ENCODE measurements at regions of chr13 and their contacts with region 1.

Region 1: DNA sequence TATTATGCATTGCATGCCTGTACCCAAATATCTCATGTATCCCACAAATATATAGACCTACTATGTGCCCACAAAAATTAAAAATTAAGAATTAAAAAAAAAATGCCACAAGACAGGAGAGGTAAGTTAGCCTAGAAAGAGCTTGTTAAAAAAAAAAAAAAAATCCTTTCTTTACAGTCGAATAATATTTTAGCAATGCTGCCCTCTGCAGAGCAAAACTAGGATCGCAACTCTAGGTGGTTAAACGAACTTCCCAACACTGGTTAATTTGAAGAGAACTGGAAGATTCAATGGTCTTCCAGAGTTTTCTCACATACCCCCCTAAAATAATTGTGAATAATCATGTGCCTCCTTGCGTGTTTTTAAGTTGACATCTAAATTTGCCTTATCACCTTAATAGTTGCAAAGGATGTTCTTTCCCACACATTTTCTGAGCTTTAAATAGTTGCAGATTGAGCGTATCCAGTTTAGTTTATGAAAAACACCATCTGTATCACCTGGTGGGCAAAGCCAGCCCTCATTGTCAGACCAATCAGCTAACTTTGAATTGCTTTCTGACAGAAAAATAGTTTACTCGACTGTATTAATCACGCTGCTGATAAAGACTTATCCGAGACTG is 47.4 kb upstream of the RCBTB2 start:
- DNase-seq: peak; percentile 47
- H3K27ac ChIP-seq: no peak overlapping the region
- CTCF ChIP-seq: peak; percentile 78

Region 2: DNA sequence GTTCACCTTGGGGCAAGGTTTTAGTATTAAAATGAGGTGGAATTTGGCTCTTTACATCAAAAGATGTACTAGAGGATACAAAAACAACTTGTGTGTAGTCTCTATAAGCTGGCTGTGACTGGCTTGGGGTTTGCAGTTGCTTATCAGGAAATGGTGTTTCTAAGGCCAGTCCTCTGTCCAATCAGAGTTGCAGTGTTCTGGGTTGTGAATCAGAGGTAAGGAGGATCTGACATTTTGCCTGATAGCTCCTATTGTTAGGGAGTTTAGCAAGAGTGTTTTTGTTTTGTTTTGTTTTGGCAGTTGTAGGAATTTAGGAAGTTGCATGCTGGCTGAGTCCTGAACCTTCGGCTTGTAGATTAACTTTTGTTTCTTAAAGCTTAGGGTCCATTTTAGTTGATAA is 1763.2 kb before region 1 on chr13:
- CTCF ChIA-PET with region 1: no interaction called
- POLR2A ChIA-PET with region 1: no interaction called
- DNase-seq: no peak
- H3K27ac ChIP-seq: no peak overlapping the region
- CTCF ChIP-seq: no peak

Region 3: DNA sequence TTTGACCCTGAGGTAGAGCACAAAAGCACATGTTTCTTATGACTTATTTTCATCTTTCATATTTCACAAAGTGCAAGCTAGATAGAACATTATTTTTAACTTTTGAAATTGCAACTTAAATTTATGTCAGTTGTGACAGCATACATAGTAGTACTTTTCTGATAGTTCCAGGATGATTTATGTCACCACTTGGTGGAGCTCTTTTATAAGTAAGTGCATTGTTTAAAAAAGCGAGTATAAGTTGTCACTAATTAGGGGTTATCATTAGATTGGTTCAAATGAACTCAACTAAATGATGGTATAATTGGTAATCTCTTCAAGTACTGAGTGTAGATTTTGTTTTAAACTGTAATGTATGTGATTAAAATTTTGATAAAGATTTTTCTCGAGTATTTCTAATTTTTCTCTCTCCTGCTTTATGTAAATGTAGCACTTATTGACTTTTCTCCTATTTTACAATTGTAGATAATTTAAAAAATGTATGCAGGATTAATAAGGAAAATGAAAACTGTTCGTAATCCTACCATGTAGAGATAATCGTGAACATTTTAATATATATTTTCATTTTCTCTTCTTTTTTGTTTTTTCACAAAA is 245.7 kb before region 1 on chr13:
- CTCF ChIA-PET with region 1: interaction called, 11 read pairs
- POLR2A ChIA-PET with region 1: no interaction called
- DNase-seq: peak; percentile 18
- H3K27ac ChIP-seq: no peak overlapping the region
- CTCF ChIP-seq: peak; percentile 67

Region 4: DNA sequence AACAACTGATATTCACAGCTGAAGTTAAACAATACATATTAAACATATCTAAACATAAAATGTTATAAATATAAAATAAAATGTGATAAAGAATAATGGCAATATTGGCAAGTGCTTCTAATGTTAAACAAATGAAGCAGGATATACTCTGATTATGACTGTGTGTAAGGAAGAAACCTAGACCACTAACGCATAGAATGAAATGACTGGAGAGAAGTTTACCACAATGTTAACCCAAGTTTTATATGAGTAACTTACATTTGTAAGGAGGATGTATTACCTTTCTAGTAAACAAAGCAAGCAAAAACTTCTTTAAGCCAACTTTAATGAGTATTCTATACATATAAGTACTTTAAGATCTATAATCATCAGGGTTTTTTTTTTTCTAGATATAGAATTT is 233.7 kb before region 1 on chr13:
- CTCF ChIA-PET with region 1: no interaction called
- POLR2A ChIA-PET with region 1: no interaction called
- DNase-seq: no peak
- H3K27ac ChIP-seq: no peak overlapping the region
- CTCF ChIP-seq: no peak

Region 5: DNA sequence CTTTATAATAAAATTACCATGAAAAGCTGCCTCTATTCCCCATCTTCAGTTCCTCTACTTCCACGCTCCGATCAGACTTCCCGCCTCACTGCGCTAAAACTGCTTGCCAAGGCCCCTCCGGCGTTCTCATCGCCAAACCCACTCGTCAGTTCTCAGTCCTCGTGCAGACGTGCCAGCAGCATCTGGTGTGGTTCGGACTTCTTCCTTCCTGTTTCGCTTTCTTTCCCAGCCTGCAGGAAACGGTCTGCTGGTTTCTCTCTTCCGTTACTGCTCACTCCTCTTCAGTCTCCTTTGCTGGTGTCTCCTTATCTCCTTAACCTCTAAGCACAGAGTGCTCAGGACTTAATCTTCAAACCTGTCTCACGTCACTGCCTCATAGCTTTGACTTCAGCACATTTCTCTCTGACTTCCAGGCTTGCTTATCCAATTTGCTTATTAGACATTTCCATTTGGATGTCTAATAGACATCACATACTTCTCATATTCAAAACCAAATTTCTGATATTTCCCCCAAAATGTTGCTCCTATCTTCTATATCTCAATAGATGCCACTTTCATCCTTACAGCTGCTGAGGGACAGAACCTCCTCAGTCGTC is 87.7 kb before region 1 on chr13:
- CTCF ChIA-PET with region 1: interaction called, 12 read pairs
- POLR2A ChIA-PET with region 1: no interaction called
- DNase-seq: no peak
- H3K27ac ChIP-seq: no peak overlapping the region
- CTCF ChIP-seq: no peak